Activated B cell treated with CpG ODN at 0.5 μM for 24 hours (primary cell): ENCODE measurements at regions of chr15 and their contacts with region 1.

Region 1: DNA sequence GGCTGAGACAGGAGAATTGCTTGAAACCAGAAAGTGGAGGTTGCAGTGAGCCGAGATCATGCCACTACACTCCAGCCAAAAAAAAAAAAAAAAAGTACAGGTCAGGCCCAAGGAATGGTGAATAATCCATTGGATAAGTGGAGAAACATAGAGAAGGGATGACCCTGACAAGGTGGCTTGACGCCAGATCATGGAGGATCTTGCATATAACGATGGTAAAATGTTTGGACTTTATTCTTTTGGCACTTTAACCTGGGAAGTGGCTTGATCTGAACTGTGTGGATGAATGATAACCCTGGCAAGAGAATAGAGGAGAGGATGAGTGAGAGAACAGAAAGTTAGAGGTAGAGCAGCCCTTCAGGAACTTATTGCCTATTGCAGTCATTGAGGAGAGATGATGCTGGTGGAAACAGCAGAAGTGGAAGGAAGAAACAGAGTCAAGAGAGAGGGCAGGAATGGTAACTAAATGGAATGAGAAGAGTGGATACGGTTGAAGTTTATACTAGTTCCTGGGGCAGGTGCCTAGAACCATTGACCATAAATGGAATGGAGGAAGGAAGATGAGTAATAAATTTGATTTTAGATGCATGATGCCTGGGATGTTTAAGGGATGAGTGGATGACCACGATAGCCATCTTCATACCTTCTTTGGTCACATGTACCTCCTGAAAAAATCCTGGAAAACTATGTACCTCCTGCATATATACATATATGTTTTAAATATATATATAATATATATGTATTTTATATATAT is 57.8 kb downstream of the BLM start:
- DNase-seq: no peak
- ATAC-seq: no peak
- H3K4me3 Mint-ChIP-seq: no peak overlapping the region
- H3K27ac Mint-ChIP-seq: no peak overlapping the region
- H3K4me1 Mint-ChIP-seq: peaks cover 6% of the 10 kb centered on the region
- H3K27me3 Mint-ChIP-seq: no peaks in the 10 kb centered on the region
- CTCF ChIP-seq: no peak

Region 2: DNA sequence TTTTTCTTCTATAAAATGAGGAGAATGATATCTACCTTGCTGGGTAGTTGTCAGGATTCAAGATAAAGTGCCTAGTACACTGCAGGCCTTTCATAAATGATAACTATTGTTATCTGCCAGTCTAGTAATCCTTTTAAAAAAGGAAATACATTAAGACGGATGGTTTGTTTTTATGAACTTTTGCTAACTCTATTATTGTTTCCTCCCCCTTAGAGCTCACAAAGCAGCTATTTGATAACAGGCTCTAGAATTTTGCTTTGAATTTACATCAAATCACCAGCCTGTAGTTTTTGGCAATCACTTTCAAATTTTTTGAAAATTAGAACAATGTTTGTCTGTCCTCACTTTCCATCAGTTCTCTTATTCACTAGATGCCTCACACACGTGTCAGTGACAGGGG is 18.0 kb before region 1 on chr15:
- CTCF ChIA-PET with region 1: no interaction called
- POLR2A ChIA-PET with region 1: interaction called, 10 read pairs
- intact Hi-C with region 1: no loop called
- DNase-seq: no peak
- ATAC-seq: no peak
- H3K4me3 Mint-ChIP-seq: no peak overlapping the region
- H3K27ac Mint-ChIP-seq: no peak overlapping the region
- H3K4me1 Mint-ChIP-seq: no peaks in the 10 kb centered on the region
- H3K27me3 Mint-ChIP-seq: no peaks in the 10 kb centered on the region
- CTCF ChIP-seq: no peak

Region 3: DNA sequence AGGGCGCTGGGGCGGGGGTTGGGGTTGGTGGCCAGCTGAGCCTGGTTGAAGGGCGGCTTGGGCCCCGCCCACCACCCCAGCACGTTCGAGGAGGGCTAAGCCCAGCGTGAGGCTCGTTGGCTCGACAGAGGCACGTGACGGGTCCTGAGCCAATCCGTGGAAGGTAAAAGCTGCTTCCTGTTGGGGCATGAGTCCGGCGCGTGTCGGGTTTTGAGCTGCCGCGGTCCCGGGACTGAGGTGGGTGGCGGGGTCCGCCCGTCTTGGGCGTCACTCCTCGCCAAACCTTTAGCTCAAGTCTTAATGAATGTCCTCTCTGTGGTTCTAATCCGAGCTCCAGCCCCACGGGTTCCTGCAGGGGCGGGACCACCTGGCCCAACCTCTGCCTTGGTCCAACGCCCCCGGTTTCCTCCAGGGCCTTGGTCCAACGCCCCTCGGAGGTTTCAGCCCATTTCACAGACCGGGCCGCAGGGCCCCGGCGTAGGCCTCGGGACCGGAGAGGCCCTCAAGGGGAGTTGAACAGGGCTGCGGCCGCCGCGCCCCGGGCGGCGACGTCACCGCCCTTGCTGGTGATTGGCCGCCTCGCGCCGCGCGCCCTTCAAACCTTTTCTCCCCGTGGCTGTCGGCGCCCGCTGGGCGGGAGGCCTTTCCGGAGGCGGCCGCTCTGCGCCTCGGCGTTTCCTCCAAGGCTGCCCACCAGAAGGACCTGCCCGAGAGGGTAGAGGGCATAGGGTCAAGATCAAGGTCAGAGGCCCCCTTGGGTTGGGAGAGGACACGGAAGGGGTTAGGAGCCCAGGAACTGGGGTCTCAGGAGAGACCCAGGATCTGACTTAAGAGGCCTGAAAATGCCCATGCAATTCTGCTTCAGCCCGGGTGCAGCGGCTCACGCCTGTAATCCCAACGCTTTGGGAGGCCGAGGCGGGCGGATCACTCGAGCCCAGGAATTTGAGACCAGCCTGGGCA is 180.1 kb after region 1 on chr15 and contains the start of gene RCCD1:
- CTCF ChIA-PET with region 1: no interaction called
- POLR2A ChIA-PET with region 1: no interaction called
- intact Hi-C with region 1: no loop called
- DNase-seq: peak; percentile 83
- ATAC-seq: peak; percentile 94
- H3K4me3 Mint-ChIP-seq: peak within 1 kb of the TSS; percentile 88
- H3K27ac Mint-ChIP-seq: peak within 1 kb of the TSS; percentile 92
- H3K4me1 Mint-ChIP-seq: peaks cover 21% of the 10 kb centered on the region
- H3K27me3 Mint-ChIP-seq: no peaks in the 10 kb centered on the region
- CTCF ChIP-seq: no peak
- total RNA-seq, gene RCCD1: 15.7 and 19.3 TPM in 2 replicates